Mucosa of descending colon (tissue), 3 donors: ENCODE measurements at regions of chr6 and their contacts with region 1.

Region 1: GRCh38 chr6:37381579-37381978 is 27.8 kb downstream of the RNF8 start:
- DNase-seq: peak in 1 of 3 donors; percentile 24
- ATAC-seq: peak; percentile 84
- H3K4me3 ChIP-seq: no peak overlapping the region
- H3K4me1 ChIP-seq: no peaks in the 10 kb centered on the region
- CTCF ChIP-seq: no peak

Region 2: GRCh38 chr6:37102279-37103168 is 279.1 kb before region 1 on chr6:
- intact Hi-C with region 1: no loop called
- DNase-seq: peak; percentile 78 to 89 (median 84)
- ATAC-seq: peak; percentile 69
- H3K4me3 ChIP-seq: no peak overlapping the region
- H3K4me1 ChIP-seq: peaks cover 29% of the 10 kb centered on the region
- CTCF ChIP-seq: no peak

Region 3: DNA sequence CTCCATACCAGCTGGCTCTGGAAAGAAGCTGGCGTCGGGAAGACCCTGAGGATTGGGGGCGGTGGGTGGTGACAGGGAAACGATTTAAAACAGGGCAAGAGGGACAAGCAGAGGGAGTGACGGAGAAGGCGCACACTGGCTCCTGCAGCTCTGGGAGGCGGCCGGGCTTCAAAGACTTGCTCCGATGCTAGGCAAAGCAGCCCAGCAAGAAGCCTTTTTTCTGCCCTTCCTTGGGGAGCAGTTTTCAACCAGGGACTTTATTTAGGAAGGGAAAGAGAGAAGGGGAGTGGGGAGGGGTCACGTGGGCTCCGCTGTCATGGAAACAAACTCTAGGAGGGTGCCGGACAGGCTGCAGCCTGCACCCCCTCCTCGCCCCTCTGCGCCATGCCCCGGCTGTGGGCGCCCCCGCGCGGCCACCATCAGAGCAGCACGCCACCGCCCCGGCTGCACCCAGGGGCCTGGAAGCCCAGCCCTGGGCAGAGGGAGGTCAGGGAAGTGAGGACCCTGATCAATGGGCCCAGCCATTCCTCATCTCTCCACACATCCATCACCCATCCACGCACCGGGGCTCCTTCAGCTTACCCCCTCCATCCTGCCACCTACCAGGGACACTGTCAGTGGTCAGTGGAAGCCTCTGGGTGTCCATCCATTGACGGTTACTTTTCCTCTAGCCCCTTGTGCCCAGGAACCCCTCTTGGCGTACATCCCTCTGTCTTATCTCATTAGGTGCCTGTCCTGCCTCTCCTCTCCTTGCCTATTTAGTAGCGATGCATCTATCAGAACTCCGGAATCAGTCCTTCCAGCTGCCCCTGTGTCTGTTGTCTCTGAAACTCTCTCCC is 184.8 kb after region 1 on chr6:
- intact Hi-C with region 1: loop called in 1 of 2 experiments (anchors 5 kb)
- DNase-seq: peak in 2 of 3 donors; percentile 56 to 68
- ATAC-seq: peak; percentile 79
- H3K4me3 ChIP-seq: no peak overlapping the region
- H3K4me1 ChIP-seq: no peaks in the 10 kb centered on the region
- CTCF ChIP-seq: peak; percentile 62